Gastrocnemius medialis (tissue), 4 donors: ENCODE measurements at regions of chr1 and their contacts with region 1.

Region 1: GRCh38 chr1:212455803-212456528 is 23.2 kb downstream of the NENF start:
- DNase-seq: peak; percentile 68 to 86
- ATAC-seq: peak; percentile 89 to 92
- H3K4me3 ChIP-seq: peak overlapping the region; percentile 19 to 42 (median 36)
- H3K27ac ChIP-seq: peak overlapping the region; percentile 67 to 82 (median 75)
- H3K4me1 ChIP-seq: peaks cover 17 to 22% of the 10 kb centered on the region in 2 donors
- H3K27me3 ChIP-seq: no peaks in the 10 kb centered on the region
- CTCF ChIP-seq: peak; percentile 97 to 99 (median 98)
- POLR2A ChIP-seq: no peak

Region 2: DNA sequence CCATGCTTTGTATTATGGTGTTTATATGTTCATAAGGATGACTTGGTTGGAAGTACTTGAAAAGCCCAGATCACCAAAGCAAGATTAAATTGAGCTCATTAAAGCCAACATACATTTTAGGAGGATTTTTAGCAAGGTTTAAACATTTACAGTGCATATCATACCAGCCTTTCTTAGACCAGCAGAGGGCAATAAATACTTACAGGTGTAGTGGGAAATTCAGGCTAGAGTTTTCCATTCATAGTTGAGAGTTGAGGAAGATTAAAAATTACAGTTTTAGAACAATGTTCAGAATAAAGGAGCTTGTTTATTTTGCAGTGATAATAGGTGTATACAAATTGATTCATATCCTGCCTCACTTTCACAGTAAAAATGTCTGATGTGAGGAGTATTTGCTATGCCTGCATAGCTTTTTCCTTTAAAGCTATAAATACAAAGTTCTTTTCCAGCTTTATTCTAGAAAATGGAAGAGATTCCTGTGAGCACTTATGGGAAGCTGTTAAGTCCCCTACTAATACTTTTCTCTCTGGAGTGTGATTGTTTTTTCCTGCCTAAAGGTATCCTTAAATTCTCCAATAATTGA is 385.2 kb before region 1 on chr1:
- in situ Hi-C with region 1: loop called in 2 of 4 experiments (anchors 10 kb)
- intact Hi-C with region 1: loop called (anchors 2 kb)
- DNase-seq: no peak
- ATAC-seq: peak; percentile 51 to 64
- H3K4me3 ChIP-seq: no peak overlapping the region
- H3K27ac ChIP-seq: peak overlapping the region in 3 of 4 donors; percentile 9 to 40 (median 17)
- H3K4me1 ChIP-seq: peaks cover 10 to 22% of the 10 kb centered on the region in 2 donors
- H3K27me3 ChIP-seq: no peaks in the 10 kb centered on the region
- CTCF ChIP-seq: peak; percentile 72 to 96 (median 84)
- POLR2A ChIP-seq: no peak

Region 3: GRCh38 chr1:212291505-212292134 is 164.3 kb before region 1 on chr1:
- in situ Hi-C with region 1: no loop called
- intact Hi-C with region 1: loop called (anchors 2 kb)
- DNase-seq: no peak
- ATAC-seq: peak; percentile 57 to 66
- H3K4me3 ChIP-seq: no peak overlapping the region
- H3K27ac ChIP-seq: peak overlapping the region; percentile 10 to 98 (median 28)
- H3K4me1 ChIP-seq: peaks cover 85 to 89% of the 10 kb centered on the region in 2 donors
- H3K27me3 ChIP-seq: no peaks in the 10 kb centered on the region
- CTCF ChIP-seq: peak; percentile 39 to 73 (median 57)
- POLR2A ChIP-seq: no peak

Region 4: GRCh38 chr1:212368073-212368484 is 87.9 kb before region 1 on chr1:
- in situ Hi-C with region 1: no loop called
- intact Hi-C with region 1: loop called (anchors 5 kb)
- DNase-seq: peak in 1 of 2 donors; percentile 52
- ATAC-seq: peak; percentile 91 to 94
- H3K4me3 ChIP-seq: no peak overlapping the region
- H3K27ac ChIP-seq: no peak overlapping the region
- H3K4me1 ChIP-seq: peaks cover 7 to 8% of the 10 kb centered on the region in 2 donors
- H3K27me3 ChIP-seq: no peaks in the 10 kb centered on the region
- CTCF ChIP-seq: peak; percentile 72 to 91 (median 77)
- POLR2A ChIP-seq: no peak

Region 5: GRCh38 chr1:212432706-212433576 is 23.0 kb before region 1 on chr1 and contains the start of gene NENF:
- in situ Hi-C with region 1: no loop called
- intact Hi-C with region 1: loop called (anchors 2 kb)
- DNase-seq: peak; percentile 47 to 71
- ATAC-seq: peak; percentile 90 to 93
- H3K4me3 ChIP-seq: peak within 1 kb of the TSS; percentile 66 to 76 (median 68)
- H3K27ac ChIP-seq: peak within 1 kb of the TSS; percentile 73 to 83 (median 78)
- H3K4me1 ChIP-seq: peaks cover 7 to 13% of the 10 kb centered on the region in 2 donors
- H3K27me3 ChIP-seq: no peaks in the 10 kb centered on the region
- CTCF ChIP-seq: no peak
- POLR2A ChIP-seq: peak; percentile 81 to 83
- total RNA-seq, gene NENF: 74.8 to 149 (median 112) TPM